Head of caudate nucleus (tissue), 42 donors: ENCODE measurements at regions of chr19 and their contacts with region 1.

Region 1: DNA sequence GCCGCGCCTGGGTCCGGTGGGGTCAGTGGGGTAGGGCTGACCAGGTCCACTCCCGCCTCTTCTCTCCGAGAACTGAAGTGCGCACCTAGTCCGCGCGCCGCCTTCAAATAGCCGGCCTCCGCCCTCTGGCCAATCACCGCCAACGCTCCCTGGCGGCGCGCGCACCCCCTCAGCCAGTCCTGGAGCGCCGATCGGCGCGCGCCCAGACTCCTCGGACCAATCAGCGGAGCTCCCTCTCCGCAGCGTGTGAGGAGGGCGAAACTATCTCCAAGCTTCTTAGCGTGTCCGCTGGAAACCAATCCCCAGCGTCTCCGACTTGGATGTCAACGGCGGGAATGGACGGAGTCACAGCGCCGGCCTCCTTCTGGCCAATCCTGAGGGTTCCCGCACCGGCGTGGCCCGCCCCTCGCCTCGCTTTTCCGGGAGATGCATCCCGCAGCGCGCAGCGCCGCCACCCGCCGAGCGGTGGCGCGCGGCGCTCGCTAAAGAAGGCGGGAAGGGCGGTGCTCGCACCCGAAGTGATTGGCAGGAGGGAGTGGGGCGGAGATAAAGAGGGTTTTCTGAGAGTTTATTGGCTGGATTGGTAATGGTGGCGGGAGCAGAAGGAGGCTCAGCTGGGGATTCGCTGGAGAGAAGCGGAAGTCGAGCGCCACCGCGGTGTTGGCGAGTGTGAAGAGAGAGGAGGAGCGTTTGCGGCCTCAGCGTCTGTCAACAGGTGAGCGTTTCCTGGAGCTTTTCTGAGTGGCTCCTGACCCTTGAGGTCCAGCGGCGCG is at the start of gene ASF1B:
- DNase-seq: peak; percentile 96 to 100 (median 99)

Region 2: DNA sequence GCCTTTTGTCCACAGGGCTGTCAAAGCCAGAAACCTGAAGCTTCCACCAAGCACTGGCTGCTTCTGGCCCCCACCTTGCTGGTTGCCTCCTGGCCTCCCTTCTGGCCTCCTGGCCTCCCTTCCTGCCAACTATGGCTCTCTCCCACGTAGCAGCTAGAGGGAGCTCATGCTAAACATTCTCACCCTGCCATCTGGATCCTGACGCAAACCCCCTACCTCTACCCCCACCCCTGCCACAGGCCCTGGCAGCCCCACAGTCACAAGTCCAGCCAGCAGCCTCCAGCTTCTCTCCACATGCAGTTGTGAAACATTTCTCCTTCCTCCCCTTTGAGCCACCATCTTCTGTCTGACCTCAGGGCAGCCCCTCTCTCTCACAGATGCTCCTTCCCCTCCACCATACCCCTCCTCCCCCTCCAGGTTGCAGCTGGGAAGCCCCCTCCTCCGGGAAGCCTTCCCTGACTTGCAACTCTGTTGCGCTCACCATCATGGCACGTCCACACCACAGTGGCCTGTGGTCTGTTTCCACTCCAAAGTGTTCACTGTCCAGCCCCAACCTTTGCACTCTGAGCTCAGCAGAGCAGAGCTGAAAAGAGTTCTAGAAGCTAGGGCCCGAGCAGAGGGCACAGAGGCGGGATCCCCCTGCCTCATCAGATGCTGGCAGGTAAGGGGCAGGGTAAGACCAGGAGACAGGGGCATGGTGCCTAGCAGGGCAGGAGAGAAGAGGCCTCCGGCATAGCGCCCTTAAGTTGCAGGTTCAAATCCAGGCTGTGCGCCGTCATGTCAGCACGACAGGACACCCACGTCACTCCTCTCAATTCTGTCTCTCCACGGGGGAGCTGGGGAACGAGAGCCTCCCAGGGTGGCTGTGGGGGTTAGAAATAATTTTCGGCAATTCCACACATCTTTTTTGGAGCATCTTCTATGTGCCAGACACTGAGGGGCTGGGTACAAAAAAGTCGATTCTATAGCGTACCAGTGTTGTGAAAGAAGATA is 62.0 kb after region 1 on chr19:
- intact Hi-C with region 1: no loop called
- DNase-seq: peak in 32 of 42 donors; percentile 20 to 82 (median 54)

Region 3: GRCh38 chr19:14347999-14348889 is 211.5 kb after region 1 on chr19:
- intact Hi-C with region 1: loop called (anchors 5 kb)
- DNase-seq: peak in 41 of 42 donors; percentile 22 to 85 (median 67)

Region 4: GRCh38 chr19:14405758-14406644 is 269.3 kb after region 1 on chr19:
- intact Hi-C with region 1: loop called (anchors 5 kb)
- DNase-seq: peak; percentile 75 to 96 (median 92)

Region 5: GRCh38 chr19:14472202-14472938 is 335.7 kb after region 1 on chr19:
- intact Hi-C with region 1: loop called (anchors 5 kb)
- DNase-seq: peak; percentile 46 to 91 (median 81)